PC-9 (cell line): ENCODE measurements at regions of chr4 and their contacts with region 1.

Region 1: GRCh38 chr4:2436301-2436700 is 17.5 kb downstream of the CFAP99 start:
- DNase-seq: no peak
- H3K4me3 ChIP-seq: no peak overlapping the region
- H3K27ac ChIP-seq: no peak overlapping the region
- H3K4me1 ChIP-seq: no peaks in the 10 kb centered on the region
- H3K27me3 ChIP-seq: peaks cover 45% of the 10 kb centered on the region
- CTCF ChIP-seq: no peak

Region 2: DNA sequence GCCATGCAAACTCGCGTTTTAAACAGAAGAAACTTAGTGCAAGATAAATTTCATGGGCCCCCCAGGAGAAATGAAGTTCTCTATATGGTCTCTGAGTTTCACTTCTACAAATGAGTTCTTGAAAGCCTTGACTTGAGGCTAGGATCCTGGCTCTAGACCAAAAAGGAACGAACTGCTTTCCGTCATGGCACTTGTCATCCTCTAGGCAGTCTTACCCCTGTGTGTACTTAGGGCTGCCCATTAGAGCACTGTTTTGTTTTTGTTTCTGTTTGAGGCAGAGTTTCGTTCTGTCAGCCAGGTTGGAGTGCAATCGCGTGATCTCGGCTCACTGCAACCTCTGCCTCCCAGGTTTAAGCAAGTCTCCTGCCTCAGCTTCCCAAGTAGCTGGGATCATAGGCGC is 61.6 kb after region 1 on chr4:
- CTCF ChIA-PET with region 1: no interaction called
- POLR2A ChIA-PET with region 1: no interaction called
- intact Hi-C with region 1: no loop called
- DNase-seq: no peak
- H3K4me3 ChIP-seq: no peak overlapping the region
- H3K27ac ChIP-seq: no peak overlapping the region
- H3K4me1 ChIP-seq: no peaks in the 10 kb centered on the region
- H3K27me3 ChIP-seq: no peaks in the 10 kb centered on the region
- CTCF ChIP-seq: no peak

Region 3: GRCh38 chr4:3819210-3819919 is 1383.1 kb after region 1 on chr4:
- CTCF ChIA-PET with region 1: interaction called, 22 read pairs
- POLR2A ChIA-PET with region 1: no interaction called
- intact Hi-C with region 1: no loop called
- DNase-seq: no peak
- H3K4me3 ChIP-seq: no peak overlapping the region
- H3K27ac ChIP-seq: no peak overlapping the region
- H3K4me1 ChIP-seq: no peaks in the 10 kb centered on the region
- H3K27me3 ChIP-seq: peaks cover 69% of the 10 kb centered on the region
- CTCF ChIP-seq: no peak